ENCODE measurements at regions of chr17 and their contacts with region 1.

Region 1: DNA sequence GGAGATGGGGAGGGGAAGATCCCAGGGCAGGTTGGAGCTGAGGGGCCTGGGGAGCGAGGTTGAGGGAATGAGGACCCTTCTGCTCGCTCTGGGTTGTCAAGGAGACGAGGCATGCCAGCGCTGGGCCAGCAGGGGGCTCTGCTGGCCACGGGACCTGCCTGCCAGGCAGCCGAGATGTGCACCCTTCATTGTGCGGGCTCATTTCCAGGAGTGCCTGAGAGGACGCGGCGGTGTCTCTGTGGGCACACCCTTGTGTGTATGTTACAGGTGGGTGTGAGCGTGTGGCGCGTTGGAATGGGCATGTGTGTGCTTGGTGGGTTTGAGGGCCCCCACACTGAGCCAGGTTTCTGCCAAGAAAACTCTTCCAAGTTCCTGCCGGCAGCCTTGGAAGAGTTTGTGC is 15.9 kb downstream of the ARHGAP23 start:
- DNase-seq: peak; percentile 96
- H3K4me3 Mint-ChIP-seq: peak overlapping the region; percentile 1
- H3K27ac Mint-ChIP-seq: no peak overlapping the region
- H3K4me1 Mint-ChIP-seq: peaks cover 36% of the 10 kb centered on the region
- H3K27me3 Mint-ChIP-seq: peaks cover 30% of the 10 kb centered on the region
- CTCF ChIP-seq: peak; percentile 100

Region 2: DNA sequence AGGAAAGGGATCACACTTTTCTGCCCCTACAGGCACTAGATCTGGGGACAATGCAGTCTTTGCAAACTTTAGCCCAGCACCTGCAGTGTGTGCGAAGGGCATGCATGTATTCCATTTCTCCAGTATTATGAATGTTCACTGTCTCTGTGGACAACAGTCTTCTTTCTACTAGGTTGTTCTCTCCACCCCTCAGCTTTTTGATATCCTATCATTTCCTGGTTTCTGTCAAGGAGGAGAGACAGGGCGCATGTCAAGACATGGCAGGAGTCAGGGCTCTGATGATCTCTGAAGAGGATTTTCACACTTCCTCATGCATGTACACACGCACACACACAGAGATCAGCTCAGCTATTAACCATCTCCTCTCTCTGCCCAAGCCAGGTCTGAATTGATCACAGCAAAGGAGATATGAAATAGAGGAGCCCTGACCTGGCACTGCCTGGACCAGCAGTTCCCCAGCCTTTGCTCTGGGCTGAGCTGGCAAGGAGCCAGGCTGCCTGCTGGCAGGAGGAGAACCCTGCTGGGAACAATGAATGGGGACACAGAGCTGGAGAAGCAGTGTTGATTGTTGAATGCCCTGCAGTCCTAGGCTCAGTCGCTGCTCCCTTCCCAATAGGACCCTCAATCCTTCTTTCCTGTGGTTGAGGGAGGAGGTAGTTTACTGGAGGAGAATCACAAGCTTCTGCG is 103.0 kb before region 1 on chr17:
- CTCF ChIA-PET with region 1: no interaction called
- intact Hi-C with region 1: no loop called
- DNase-seq: peak; percentile 84
- H3K4me3 Mint-ChIP-seq: no peak overlapping the region
- H3K27ac Mint-ChIP-seq: no peak overlapping the region
- H3K4me1 Mint-ChIP-seq: peaks cover 8% of the 10 kb centered on the region
- H3K27me3 Mint-ChIP-seq: peaks cover 77% of the 10 kb centered on the region
- CTCF ChIP-seq: no peak

Region 3: GRCh38 chr17:38428112-38428642 is 16.0 kb before region 1 on chr17 and contains the start of gene ARHGAP23:
- CTCF ChIA-PET with region 1: interaction called, 24 read pairs
- intact Hi-C with region 1: loop called (anchors 1 kb)
- DNase-seq: peak; percentile 78
- H3K4me3 Mint-ChIP-seq: peak within 1 kb of the TSS; percentile 70
- H3K27ac Mint-ChIP-seq: peak within 1 kb of the TSS; percentile 56
- H3K4me1 Mint-ChIP-seq: peaks cover 14% of the 10 kb centered on the region
- H3K27me3 Mint-ChIP-seq: peaks cover 68% of the 10 kb centered on the region
- CTCF ChIP-seq: peak; percentile 11
- total RNA-seq, gene ARHGAP23: 140 and 304 TPM in 2 replicates

Region 4: GRCh38 chr17:38469875-38470274 is 25.7 kb after region 1 on chr17:
- CTCF ChIA-PET with region 1: interaction called, 5 read pairs
- intact Hi-C with region 1: loop called (anchors 1 kb)
- DNase-seq: no peak
- H3K4me3 Mint-ChIP-seq: no peak overlapping the region
- H3K27ac Mint-ChIP-seq: no peak overlapping the region
- H3K4me1 Mint-ChIP-seq: peaks cover 36% of the 10 kb centered on the region
- H3K27me3 Mint-ChIP-seq: peaks cover 14% of the 10 kb centered on the region
- CTCF ChIP-seq: no peak

Region 5: DNA sequence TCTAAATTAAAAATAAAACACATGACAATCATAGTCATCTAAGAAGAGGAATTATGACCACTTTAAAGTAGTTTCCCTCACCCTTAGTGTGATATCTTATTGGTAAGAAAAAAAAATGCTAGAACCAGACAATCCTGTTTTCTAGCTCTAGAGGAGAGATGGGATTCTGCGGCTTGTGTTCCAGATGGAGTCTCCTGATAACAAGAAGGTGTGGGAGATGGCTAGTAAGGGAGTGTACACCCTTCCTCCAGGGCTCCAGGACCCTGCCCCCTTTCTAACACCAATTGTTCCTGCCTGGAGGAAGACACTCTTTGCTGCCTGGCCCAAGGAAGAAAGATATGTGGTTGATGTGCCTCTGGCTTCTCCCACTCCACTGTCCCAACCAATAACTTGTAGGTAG is 591.9 kb after region 1 on chr17:
- CTCF ChIA-PET with region 1: no interaction called
- intact Hi-C with region 1: no loop called
- DNase-seq: peak; percentile 61
- H3K4me3 Mint-ChIP-seq: no peak overlapping the region
- H3K27ac Mint-ChIP-seq: no peak overlapping the region
- H3K4me1 Mint-ChIP-seq: peaks cover 9% of the 10 kb centered on the region
- H3K27me3 Mint-ChIP-seq: peaks cover 80% of the 10 kb centered on the region
- CTCF ChIP-seq: no peak

Measured in Calu3 (cell line).